ENCODE measurements at regions of chr7 and their contacts with region 1.

Region 1: DNA sequence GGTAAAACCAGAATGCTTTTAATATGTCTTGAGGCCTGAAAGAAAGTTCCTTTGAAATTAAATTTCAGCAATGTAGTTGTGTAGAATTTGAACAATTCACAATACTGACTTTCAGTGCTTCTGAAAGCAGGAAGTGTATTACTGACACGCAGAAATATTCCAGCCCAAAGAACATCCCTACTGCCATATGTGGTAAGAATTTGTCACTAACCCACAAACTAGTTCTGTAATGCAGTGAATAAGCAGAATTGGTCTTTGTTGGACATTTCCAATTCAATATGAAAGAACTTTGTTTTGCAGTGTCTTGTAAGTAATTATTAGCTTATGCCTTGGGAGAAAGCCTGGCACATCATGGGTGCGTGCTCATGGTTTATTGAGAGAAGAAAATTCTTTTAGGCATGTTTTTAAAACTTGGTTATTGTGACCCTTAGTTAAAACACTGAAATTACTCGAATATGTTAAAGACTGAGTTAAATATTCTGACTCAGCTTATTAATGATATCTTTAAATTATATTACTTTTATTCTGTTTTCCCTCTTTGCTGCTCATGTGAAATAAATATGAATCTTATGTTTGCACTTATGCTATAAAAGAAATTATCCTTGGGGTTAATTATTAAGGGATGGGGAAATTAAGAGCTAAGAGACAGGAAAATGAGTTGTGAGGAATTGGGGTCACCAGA is 33.4 kb downstream of the PTPN12 start:
- DNase-seq: no peak
- ATAC-seq: peak in 4 of 8 donors; percentile 54 to 66 (median 59)
- H3K4me3 ChIP-seq: no peak overlapping the region
- H3K27ac ChIP-seq: peak overlapping the region in 3 of 10 donors; percentile 7 to 69 (median 12)
- H3K4me1 ChIP-seq: peaks cover 0 to 63% (median 28%) of the 10 kb centered on the region in 9 donors
- H3K27me3 ChIP-seq: no peaks in the 10 kb centered on the region
- CTCF ChIP-seq: no peak

Region 2: DNA sequence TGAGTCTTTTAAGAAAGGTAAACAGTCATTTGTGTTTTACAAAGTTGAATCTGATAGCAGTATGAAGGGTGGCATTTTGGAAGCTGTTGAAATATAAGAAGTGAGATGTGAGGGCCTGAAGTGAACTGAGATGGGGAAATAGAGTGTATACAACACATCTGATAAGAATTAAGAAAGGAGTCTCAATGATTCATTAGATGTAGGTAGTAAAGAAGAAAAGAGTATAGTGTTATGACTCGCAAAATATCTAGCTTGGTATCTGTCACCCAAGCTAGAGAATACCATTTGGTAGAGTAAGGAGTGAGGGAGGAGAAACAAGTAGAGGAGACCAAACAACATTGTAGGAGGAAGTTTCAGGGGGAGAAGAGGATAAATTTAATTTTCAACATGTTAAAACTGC is 28.1 kb before region 1 on chr7:
- intact Hi-C with region 1: loop called in 2 of 10 experiments (anchors 5 kb)
- DNase-seq: no peak
- ATAC-seq: no peak
- H3K4me3 ChIP-seq: no peak overlapping the region
- H3K27ac ChIP-seq: peak overlapping the region in 1 of 10 donors; percentile 54
- H3K4me1 ChIP-seq: peaks cover 6 to 88% (median 69%) of the 10 kb centered on the region in 9 donors
- H3K27me3 ChIP-seq: no peaks in the 10 kb centered on the region
- CTCF ChIP-seq: no peak

Region 3: GRCh38 chr7:77657427-77658224 is 87.2 kb after region 1 on chr7:
- intact Hi-C with region 1: no loop called
- DNase-seq: no peak
- ATAC-seq: no peak
- H3K4me3 ChIP-seq: no peak overlapping the region
- H3K27ac ChIP-seq: no peak overlapping the region
- H3K4me1 ChIP-seq: no peaks in the 10 kb centered on the region
- H3K27me3 ChIP-seq: no peaks in the 10 kb centered on the region
- CTCF ChIP-seq: peak in 8 of 9 donors; percentile 26 to 60 (median 53)